ENCODE measurements at regions of chr2 and their contacts with region 1.

Region 1: DNA sequence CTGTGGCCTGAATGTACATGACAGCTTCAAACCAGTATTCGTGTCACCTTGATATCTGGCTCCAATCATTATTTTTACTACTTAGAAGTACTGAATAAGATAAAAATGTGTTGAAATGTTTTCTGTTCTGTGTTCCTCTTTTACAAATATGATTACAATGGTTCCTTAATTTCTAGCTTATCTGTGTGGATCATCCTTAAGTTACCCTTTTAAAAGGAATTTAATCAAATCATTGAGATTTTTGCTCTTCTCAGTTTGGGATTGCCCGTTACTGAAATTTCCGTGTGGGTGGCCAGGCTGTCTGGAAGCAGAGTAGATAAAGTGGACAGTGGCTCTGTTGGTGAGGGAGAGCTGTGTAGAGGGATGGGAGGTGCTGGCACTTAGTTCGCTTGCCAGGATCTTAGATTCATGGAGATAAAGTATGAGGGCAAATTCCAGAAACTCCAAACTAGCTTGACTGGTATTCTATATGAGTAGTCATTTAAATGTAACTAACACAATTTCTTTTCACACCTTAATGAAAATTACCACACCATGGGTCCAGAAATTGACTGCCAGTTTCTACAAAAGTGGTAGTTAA is 27.4 kb upstream of the SAG start:
- DNase-seq: no peak
- ATAC-seq: no peak
- H3K4me3 ChIP-seq: no peak overlapping the region
- H3K27ac ChIP-seq: no peak overlapping the region
- H3K4me1 ChIP-seq: no peaks in the 10 kb centered on the region
- H3K27me3 ChIP-seq: no peaks in the 10 kb centered on the region
- CTCF ChIP-seq: no peak

Region 2: DNA sequence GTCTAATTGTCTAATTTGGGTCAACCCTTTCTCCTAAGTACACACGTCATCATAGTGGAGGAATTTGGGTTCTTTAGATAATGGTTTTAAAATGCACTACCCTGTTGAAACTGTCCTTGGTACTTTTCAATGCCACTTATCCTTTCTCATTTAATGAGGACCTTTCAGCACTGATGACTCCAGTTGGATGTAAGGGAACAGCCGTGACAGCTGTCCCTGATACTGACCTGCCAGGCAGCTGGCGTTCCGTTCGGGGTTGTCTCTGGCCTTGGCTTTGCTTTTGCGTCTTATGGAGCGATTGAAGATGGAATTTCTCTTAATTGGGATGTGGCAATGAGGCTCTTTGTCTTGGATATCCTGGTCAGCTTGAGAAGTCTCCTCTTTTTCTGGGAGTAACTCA is 305.8 kb before region 1 on chr2:
- CTCF ChIA-PET with region 1: interaction called, 15 read pairs
- POLR2A ChIA-PET with region 1: no interaction called
- in situ Hi-C with region 1: no loop called
- intact Hi-C with region 1: no loop called
- DNase-seq: no peak
- ATAC-seq: no peak
- H3K4me3 ChIP-seq: no peak overlapping the region
- H3K27ac ChIP-seq: peak overlapping the region; percentile 60; the same call in 1 of the 2 replicates
- H3K4me1 ChIP-seq: peaks cover 18% of the 10 kb centered on the region
- H3K27me3 ChIP-seq: no peaks in the 10 kb centered on the region
- CTCF ChIP-seq: no peak

Region 3: GRCh38 chr2:233130481-233131020 is 149.7 kb before region 1 on chr2:
- CTCF ChIA-PET with region 1: no interaction called
- POLR2A ChIA-PET with region 1: no interaction called
- in situ Hi-C with region 1: no loop called
- intact Hi-C with region 1: no loop called
- DNase-seq: no peak
- ATAC-seq: no peak
- H3K4me3 ChIP-seq: no peak overlapping the region
- H3K27ac ChIP-seq: no peak overlapping the region
- H3K4me1 ChIP-seq: no peaks in the 10 kb centered on the region
- H3K27me3 ChIP-seq: no peaks in the 10 kb centered on the region
- CTCF ChIP-seq: no peak

Region 4: GRCh38 chr2:233389601-233390125 is 109.5 kb after region 1 on chr2:
- CTCF ChIA-PET with region 1: no interaction called
- POLR2A ChIA-PET with region 1: interaction called, 10 read pairs
- in situ Hi-C with region 1: no loop called
- intact Hi-C with region 1: no loop called
- DNase-seq: no peak
- ATAC-seq: no peak
- H3K4me3 ChIP-seq: no peak overlapping the region
- H3K27ac ChIP-seq: no peak overlapping the region
- H3K4me1 ChIP-seq: peaks cover 3% of the 10 kb centered on the region; the same call in 1 of the 2 replicates
- H3K27me3 ChIP-seq: no peaks in the 10 kb centered on the region
- CTCF ChIP-seq: no peak

Region 5: DNA sequence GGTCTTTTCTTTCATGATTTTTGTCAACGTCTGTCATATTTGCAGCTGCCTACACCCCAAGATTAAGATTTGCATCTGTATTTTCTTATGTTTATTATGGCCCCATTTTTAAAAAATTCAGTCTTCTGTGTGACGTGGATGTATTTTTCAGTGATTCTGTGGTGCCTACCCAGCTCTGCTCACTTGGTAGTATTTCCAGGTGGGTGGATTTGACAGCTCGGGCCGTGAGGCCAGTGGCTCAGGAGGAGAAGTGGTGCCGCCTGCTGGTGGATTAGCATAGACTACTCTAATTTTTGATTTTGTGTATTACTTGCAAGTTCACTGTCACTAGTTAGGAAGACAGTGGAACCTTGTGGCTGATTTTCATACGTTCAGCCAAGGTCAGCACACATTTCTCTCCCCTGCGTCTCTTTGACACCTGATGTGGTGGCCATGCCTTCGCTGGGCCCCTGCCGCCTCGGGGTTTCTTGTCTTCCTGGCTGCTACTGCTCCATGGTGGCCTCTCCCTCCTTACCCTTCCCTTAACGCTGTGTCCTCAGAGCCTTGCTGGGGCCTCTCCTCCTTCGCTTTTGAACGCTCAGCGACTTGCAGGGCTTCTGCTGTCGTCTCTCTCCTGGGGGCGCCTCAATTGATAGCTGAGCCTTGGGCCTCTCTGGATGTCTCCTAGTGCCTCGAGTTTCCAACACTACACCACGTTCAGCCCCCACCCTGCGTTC is 163.4 kb after region 1 on chr2:
- CTCF ChIA-PET with region 1: no interaction called
- POLR2A ChIA-PET with region 1: no interaction called
- in situ Hi-C with region 1: no loop called
- intact Hi-C with region 1: loop called (anchors 5 kb)
- DNase-seq: no peak
- ATAC-seq: peak; percentile 81
- H3K4me3 ChIP-seq: no peak overlapping the region
- H3K27ac ChIP-seq: no peak overlapping the region
- H3K4me1 ChIP-seq: peaks cover 11% of the 10 kb centered on the region
- H3K27me3 ChIP-seq: no peaks in the 10 kb centered on the region
- CTCF ChIP-seq: peak; percentile 92